Naive thymus-derived CD8-positive, alpha-beta T cell (primary cell): ENCODE measurements at regions of chr2 and their contacts with region 1.

Region 1: DNA sequence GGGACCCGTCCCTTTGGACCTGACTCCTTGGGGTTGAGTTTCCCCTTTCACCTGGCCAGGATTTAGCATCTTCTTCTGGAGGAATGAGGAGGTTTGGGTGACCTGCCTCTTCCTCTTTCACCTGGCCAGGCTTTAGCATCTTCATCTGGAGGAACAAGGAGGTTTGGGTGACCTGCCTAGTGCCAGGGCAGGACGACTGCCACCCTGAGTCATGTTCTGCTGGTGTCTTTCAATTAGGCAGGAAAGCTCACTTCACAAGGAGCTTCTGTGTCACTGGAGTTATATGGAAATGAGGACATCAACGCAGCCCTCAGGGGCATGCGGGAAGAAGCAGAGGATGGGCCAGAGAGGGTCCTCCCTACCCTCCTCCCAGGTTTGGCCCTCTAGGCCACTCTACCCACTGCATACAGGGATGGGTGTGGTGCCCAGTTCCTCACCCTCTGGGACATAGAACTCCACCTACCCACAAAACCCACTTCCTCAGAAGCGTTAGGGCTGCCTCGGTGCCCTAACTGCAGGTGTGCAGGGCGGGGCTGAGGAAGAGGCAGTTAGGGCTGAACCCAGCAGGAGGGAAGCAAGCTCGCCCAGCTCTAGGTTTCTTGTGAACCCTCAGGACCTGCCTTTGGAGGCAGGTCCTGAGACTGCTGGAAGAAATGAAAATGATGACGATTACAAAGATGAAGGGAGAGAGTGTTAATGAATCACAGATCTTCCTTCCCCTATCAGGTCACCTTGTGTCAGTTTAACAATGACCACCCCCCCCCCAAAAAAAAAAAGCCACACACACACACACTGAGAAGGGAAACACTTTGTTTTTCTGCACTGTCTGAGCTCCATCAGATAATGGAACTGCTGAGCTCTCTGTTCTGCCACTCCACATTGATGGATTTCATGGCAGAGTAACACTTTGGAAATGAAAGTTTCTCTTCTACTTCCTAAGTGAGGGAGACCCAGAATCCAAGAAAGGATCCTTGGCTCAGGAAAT is 71.0 kb downstream of the ARL4C start:
- DNase-seq: peak; percentile 47 to 91 (median 85)
- ATAC-seq: peak; percentile 75 to 78
- H3K4me3 Mint-ChIP-seq: peak overlapping the region; percentile 59 to 88 (median 80)
- H3K27ac Mint-ChIP-seq: peak overlapping the region; percentile 96 to 100 (median 100)
- H3K4me1 Mint-ChIP-seq: peaks cover 42 to 95% (median 90%) of the 10 kb centered on the region in 4 donors
- H3K27me3 Mint-ChIP-seq: no peaks in the 10 kb centered on the region

Region 2: DNA sequence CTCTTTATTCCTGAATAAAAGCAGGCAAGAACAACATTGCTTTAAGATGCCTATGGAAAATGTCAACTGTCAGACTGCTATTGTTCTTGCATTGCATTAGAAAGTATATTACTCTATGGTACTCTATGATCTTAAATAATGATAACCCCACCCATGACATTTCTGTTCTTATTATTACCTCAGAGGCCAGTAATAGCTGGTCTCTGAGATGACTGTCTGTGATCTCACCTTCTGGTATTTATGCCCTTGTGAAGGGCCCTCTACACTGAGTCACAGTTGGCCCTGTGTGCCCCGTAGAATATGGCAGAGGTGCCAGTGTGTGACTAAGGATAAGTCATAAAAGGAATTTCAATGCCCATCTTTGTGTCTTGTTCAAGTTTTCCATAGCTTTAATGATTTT is 314.4 kb before region 1 on chr2:
- POLR2A ChIA-PET with region 1: no interaction called
- DNase-seq: no peak
- ATAC-seq: no peak
- H3K4me3 Mint-ChIP-seq: no peak overlapping the region
- H3K27ac Mint-ChIP-seq: no peak overlapping the region
- H3K4me1 Mint-ChIP-seq: peaks cover 0 to 4% (median 0%) of the 10 kb centered on the region in 4 donors
- H3K27me3 Mint-ChIP-seq: peaks cover 0 to 9% (median 0%) of the 10 kb centered on the region in 5 donors

Region 3: DNA sequence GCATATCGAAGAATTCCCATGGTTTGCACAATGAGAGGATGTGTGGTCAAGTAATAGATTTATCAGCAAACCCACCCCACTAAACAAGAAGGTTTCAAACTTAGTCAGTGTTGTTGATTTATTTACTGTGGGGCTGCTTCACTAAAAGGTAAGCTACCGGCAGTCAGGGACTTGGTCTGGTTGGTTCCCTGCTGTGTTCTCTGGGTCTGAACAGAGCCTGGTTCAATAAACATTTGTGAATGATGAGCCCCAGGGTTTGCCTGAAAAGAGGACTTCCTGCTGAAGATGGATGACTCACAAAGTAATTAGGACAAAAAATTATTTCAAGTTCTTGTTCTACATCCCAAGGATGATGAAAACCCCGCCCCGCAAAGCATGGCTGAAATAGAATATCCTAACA is 267.1 kb before region 1 on chr2:
- POLR2A ChIA-PET with region 1: no interaction called
- DNase-seq: no peak
- ATAC-seq: no peak
- H3K4me3 Mint-ChIP-seq: no peak overlapping the region
- H3K27ac Mint-ChIP-seq: no peak overlapping the region
- H3K4me1 Mint-ChIP-seq: peaks cover 6 to 12% (median 8%) of the 10 kb centered on the region in 4 donors
- H3K27me3 Mint-ChIP-seq: peaks cover 0 to 6% (median 0%) of the 10 kb centered on the region in 5 donors

Region 4: GRCh38 chr2:234368861-234369261 is 57.0 kb before region 1 on chr2:
- POLR2A ChIA-PET with region 1: interaction called, 20 read pairs
- DNase-seq: peak in 7 of 10 donors; percentile 4 to 38 (median 27)
- ATAC-seq: peak; percentile 55 to 80
- H3K4me3 Mint-ChIP-seq: peak overlapping the region in 9 of 10 donors; percentile 24 to 81 (median 54)
- H3K27ac Mint-ChIP-seq: peak overlapping the region; percentile 59 to 96 (median 86)
- H3K4me1 Mint-ChIP-seq: peaks cover 37 to 77% (median 73%) of the 10 kb centered on the region in 4 donors
- H3K27me3 Mint-ChIP-seq: no peaks in the 10 kb centered on the region

Region 5: DNA sequence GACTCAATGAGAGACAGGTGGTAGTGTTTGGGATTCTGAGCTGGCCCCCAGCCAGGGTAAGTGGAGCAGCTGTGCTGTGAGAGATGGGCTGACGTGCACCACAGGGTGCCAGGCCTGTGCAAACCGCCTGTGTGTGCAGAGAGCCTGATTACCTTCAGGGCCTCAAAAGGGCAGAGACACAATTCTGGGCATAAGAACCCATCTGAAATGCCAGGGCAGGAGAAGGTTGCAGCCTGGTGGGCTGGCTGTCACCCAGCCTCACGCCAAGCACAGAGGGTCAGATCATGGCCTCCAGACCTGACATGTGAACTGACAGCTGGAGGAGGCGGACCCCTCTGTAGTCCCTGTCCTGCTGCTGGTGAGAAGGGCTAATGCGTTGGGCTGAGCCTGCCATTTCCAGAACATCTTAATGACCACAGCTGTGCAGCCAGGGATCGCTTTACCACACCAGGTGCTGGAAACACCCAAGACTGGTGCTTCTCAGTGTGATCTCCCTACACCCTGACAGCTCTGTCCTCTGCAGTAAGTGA is 30.0 kb before region 1 on chr2:
- POLR2A ChIA-PET with region 1: interaction called, 15 read pairs
- DNase-seq: no peak
- ATAC-seq: no peak
- H3K4me3 Mint-ChIP-seq: peak overlapping the region in 2 of 10 donors; percentile 22 to 45
- H3K27ac Mint-ChIP-seq: peak overlapping the region in 9 of 10 donors; percentile 8 to 88 (median 76)
- H3K4me1 Mint-ChIP-seq: peaks cover 28 to 78% (median 58%) of the 10 kb centered on the region in 4 donors
- H3K27me3 Mint-ChIP-seq: no peaks in the 10 kb centered on the region

Region 6: GRCh38 chr2:234437642-234438304 is 11.9 kb after region 1 on chr2:
- POLR2A ChIA-PET with region 1: interaction called, 593 read pairs
- DNase-seq: peak in 1 of 10 donors; percentile 12
- ATAC-seq: peak in 1 of 2 donors; percentile 12
- H3K4me3 Mint-ChIP-seq: peak overlapping the region in 9 of 10 donors; percentile 13 to 82 (median 72)
- H3K27ac Mint-ChIP-seq: peak overlapping the region; percentile 84 to 96 (median 91)
- H3K4me1 Mint-ChIP-seq: peaks cover 44 to 91% (median 82%) of the 10 kb centered on the region in 4 donors
- H3K27me3 Mint-ChIP-seq: no peaks in the 10 kb centered on the region

Region 7: GRCh38 chr2:234463626-234464290 is 37.8 kb after region 1 on chr2:
- POLR2A ChIA-PET with region 1: interaction called, 593 read pairs
- DNase-seq: peak; percentile 31 to 86 (median 78)
- ATAC-seq: peak; percentile 86 to 93
- H3K4me3 Mint-ChIP-seq: peak overlapping the region; percentile 58 to 89 (median 84)
- H3K27ac Mint-ChIP-seq: peak overlapping the region; percentile 90 to 99 (median 96)
- H3K4me1 Mint-ChIP-seq: peaks cover 39 to 72% (median 67%) of the 10 kb centered on the region in 4 donors
- H3K27me3 Mint-ChIP-seq: no peaks in the 10 kb centered on the region

Region 8: GRCh38 chr2:234488913-234489451 is 63.1 kb after region 1 on chr2:
- POLR2A ChIA-PET with region 1: interaction called, 191 read pairs
- DNase-seq: peak; percentile 40 to 88 (median 80)
- ATAC-seq: peak; percentile 75 to 82
- H3K4me3 Mint-ChIP-seq: peak overlapping the region; percentile 85 to 100 (median 90)
- H3K27ac Mint-ChIP-seq: peak overlapping the region; percentile 95 to 100 (median 99)
- H3K4me1 Mint-ChIP-seq: peaks cover 44 to 93% (median 85%) of the 10 kb centered on the region in 4 donors
- H3K27me3 Mint-ChIP-seq: no peaks in the 10 kb centered on the region

Region 9: DNA sequence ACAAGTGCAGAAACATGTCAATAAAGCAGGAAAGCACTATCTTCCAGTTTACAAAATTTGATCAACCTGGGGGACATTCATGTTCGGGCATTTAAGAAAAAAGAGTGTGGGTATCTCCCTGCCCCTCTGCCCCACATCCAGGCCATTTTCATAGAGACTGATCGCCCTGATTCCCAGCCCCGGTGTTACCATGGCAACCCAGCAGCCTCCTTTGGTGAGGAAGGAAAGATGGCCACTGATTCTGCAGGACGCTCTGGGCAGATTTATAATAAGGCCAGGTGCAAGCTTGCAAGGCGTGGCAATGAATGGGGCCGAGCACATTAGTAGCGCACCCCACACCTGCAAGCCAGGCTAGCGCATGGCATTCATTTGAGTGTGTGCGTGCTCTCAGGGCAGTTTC is 107.7 kb after region 1 on chr2:
- POLR2A ChIA-PET with region 1: no interaction called
- DNase-seq: no peak
- ATAC-seq: no peak
- H3K4me3 Mint-ChIP-seq: no peak overlapping the region
- H3K27ac Mint-ChIP-seq: no peak overlapping the region
- H3K4me1 Mint-ChIP-seq: peaks cover 0 to 2% (median 0%) of the 10 kb centered on the region in 4 donors
- H3K27me3 Mint-ChIP-seq: peaks cover 6 to 13% (median 8%) of the 10 kb centered on the region in 5 donors